Naive thymus-derived CD4-positive, alpha-beta T cell (primary cell): ENCODE measurements at regions of chr15 and their contacts with region 1.

Region 1: GRCh38 chr15:75201609-75202250 is at the start of gene C15orf39:
- DNase-seq: peak; percentile 66 to 88 (median 84)
- ATAC-seq: peak; percentile 78
- H3K4me3 ChIP-seq: peak within 1 kb of the TSS; percentile 84
- H3K4me3 Mint-ChIP-seq: peak within 1 kb of the TSS; percentile 89 to 98 (median 94)
- H3K27ac ChIP-seq: peak within 1 kb of the TSS; percentile 92
- H3K27ac Mint-ChIP-seq: peak within 1 kb of the TSS; percentile 69 to 95 (median 88)
- H3K4me1 ChIP-seq: peaks cover 26 to 27% of the 10 kb centered on the region in 2 donors
- H3K4me1 Mint-ChIP-seq: peaks cover 19 to 68% (median 39%) of the 10 kb centered on the region in 7 donors
- H3K27me3 ChIP-seq: no peaks in the 10 kb centered on the region
- H3K27me3 Mint-ChIP-seq: no peaks in the 10 kb centered on the region
- total RNA-seq, gene C15orf39: 30.9 to 124 (median 50.5) TPM

Region 2: GRCh38 chr15:73991726-73992593 is 1209.8 kb before region 1 on chr15 and contains the start of gene STOML1:
- CTCF ChIA-PET with region 1: no interaction called
- POLR2A ChIA-PET with region 1: no interaction called
- intact Hi-C with region 1: loop called in 1 of 2 experiments (anchors 5 kb)
- DNase-seq: peak; percentile 85 to 99 (median 91)
- ATAC-seq: peak; percentile 91
- H3K4me3 ChIP-seq: peak within 1 kb of the TSS; percentile 68
- H3K4me3 Mint-ChIP-seq: peak within 1 kb of the TSS; percentile 82 to 100 (median 98)
- H3K27ac ChIP-seq: peak within 1 kb of the TSS; percentile 90
- H3K27ac Mint-ChIP-seq: peak within 1 kb of the TSS; percentile 72 to 99 (median 87)
- H3K4me1 ChIP-seq: peaks cover 33 to 35% of the 10 kb centered on the region in 2 donors
- H3K4me1 Mint-ChIP-seq: peaks cover 28 to 62% (median 49%) of the 10 kb centered on the region in 7 donors
- H3K27me3 ChIP-seq: no peaks in the 10 kb centered on the region
- H3K27me3 Mint-ChIP-seq: no peaks in the 10 kb centered on the region
- total RNA-seq, gene STOML1: 7.5 to 14.5 (median 12.3) TPM

Region 3: DNA sequence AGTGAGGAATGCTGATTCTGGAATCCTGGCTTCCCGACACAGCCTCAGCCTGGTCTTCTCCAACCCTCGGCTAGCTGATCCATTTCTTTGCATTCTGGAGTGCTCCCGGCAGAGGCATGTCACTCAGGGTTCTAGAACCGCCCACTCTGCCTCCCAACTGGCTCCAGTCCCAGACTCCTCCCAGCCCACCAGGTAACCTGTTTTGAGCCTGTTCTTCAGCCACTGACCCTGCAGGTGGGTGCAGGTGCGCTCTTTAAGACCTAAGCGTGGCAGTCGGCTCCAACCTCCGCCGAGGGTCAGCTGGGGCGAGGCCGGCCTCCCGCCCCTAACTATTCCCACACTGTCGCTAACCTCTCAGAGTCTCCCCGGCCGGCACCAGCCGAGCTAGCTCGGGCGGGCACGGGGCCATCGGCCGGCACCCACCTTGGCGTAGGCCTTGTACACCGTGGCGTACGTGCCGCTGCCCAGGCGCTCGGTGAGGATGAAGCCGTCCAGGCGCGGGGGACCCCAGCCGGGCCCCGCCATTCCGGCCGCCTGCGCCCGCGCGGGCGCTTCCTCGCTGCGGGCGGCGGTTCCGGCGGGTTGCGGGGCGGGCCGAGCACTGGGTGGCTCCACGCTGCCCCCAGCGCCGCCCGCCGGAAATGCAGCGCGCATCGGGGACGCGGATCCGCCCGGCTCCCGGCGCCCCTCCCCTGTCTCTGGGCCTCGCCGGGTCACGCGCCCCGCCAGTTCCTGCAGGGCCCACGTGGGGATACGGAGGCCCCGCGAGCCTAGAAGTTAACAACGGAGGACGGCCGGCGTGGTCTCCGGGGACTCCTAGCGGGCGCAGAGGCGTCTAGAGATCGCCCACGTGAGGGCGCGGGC is 358.9 kb before region 1 on chr15 and contains the start of gene ULK3:
- CTCF ChIA-PET with region 1: no interaction called
- POLR2A ChIA-PET with region 1: interaction called, 5 read pairs
- intact Hi-C with region 1: loop called (anchors 2 to 10 kb)
- DNase-seq: peak; percentile 89 to 97 (median 93)
- ATAC-seq: peak; percentile 97
- H3K4me3 ChIP-seq: peak within 1 kb of the TSS; percentile 74
- H3K4me3 Mint-ChIP-seq: peak within 1 kb of the TSS; percentile 80 to 95 (median 90)
- H3K27ac ChIP-seq: peak within 1 kb of the TSS; percentile 79
- H3K27ac Mint-ChIP-seq: peak within 1 kb of the TSS; percentile 88 to 95 (median 94)
- H3K4me1 ChIP-seq: peaks cover 40 to 50% of the 10 kb centered on the region in 2 donors
- H3K4me1 Mint-ChIP-seq: peaks cover 26 to 62% (median 50%) of the 10 kb centered on the region in 7 donors
- H3K27me3 ChIP-seq: no peaks in the 10 kb centered on the region
- H3K27me3 Mint-ChIP-seq: no peaks in the 10 kb centered on the region
- total RNA-seq, gene ULK3: 53.2 to 106 (median 59.2) TPM

Region 4: DNA sequence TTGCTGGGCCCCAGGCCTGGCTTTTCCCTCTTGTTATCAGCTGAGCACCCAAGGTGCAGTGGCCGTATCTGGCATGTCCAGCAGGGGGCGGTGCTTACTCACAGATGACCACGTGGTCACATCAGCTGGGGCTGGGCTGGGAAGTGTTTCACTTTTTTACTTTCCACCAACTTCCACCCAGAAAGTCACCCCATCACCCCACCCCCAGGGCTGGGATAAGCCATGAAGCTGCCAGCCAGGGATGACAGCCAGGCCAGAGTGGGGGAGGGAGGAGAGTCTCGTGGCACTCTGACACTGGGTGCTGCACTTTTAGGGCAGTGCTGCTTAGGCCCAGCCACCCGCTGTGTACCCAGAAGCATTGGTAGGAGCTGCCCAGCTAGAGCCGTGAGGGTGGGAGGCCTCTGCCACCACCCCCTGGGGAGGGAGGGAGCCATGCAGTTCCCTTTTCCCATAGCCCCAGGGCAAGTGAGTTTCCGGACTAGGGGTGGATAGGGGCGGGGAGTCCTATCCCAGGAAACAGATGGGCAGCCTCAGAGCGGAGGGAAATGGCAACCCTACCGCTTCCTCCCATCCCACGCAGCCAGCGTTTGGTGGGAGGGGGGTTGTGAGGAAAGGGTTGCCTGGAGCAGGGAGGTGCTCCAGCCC is 172.2 kb before region 1 on chr15:
- CTCF ChIA-PET with region 1: interaction called, 59 read pairs
- POLR2A ChIA-PET with region 1: interaction called, 12 read pairs
- intact Hi-C with region 1: loop called in 1 of 2 experiments (anchors 1 kb)
- DNase-seq: peak; percentile 67 to 88 (median 80)
- ATAC-seq: peak; percentile 93
- H3K4me3 ChIP-seq: no peak overlapping the region
- H3K4me3 Mint-ChIP-seq: peak overlapping the region in 2 of 10 donors; percentile 6 to 62
- H3K27ac ChIP-seq: no peak overlapping the region
- H3K27ac Mint-ChIP-seq: peak overlapping the region in 5 of 9 donors; percentile 48 to 85 (median 58)
- H3K4me1 ChIP-seq: no peaks in the 10 kb centered on the region
- H3K4me1 Mint-ChIP-seq: peaks cover 16 to 51% (median 25%) of the 10 kb centered on the region in 7 donors
- H3K27me3 ChIP-seq: no peaks in the 10 kb centered on the region
- H3K27me3 Mint-ChIP-seq: no peaks in the 10 kb centered on the region

Region 5: DNA sequence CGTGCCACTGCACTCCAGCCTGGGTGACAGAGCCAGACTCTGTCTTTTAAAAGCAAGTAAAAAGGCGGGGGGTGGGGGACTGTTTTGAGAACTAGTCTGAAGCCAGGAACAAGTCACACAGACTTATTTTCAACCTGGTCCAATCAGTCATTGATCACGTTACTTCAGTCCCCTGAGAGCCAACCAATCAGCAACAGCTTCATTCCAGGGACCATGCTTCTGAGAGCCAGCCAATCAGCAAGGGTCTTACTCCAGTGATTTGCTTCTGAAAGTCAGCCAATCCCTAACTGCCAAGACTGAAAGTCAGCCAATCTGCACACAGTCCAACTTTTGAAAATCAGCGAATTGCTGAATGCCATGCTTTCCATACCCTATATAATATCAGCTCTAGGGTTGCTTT is 48.6 kb before region 1 on chr15:
- CTCF ChIA-PET with region 1: no interaction called
- POLR2A ChIA-PET with region 1: no interaction called
- intact Hi-C with region 1: loop called in 1 of 2 experiments (anchors 1 kb)
- DNase-seq: peak in 2 of 9 donors; percentile 9 to 13
- ATAC-seq: peak; percentile 68
- H3K4me3 ChIP-seq: no peak overlapping the region
- H3K4me3 Mint-ChIP-seq: peak overlapping the region in 1 of 10 donors; percentile 14
- H3K27ac ChIP-seq: no peak overlapping the region
- H3K27ac Mint-ChIP-seq: no peak overlapping the region
- H3K4me1 ChIP-seq: no peaks in the 10 kb centered on the region
- H3K4me1 Mint-ChIP-seq: peaks cover 0 to 41% (median 10%) of the 10 kb centered on the region in 7 donors
- H3K27me3 ChIP-seq: no peaks in the 10 kb centered on the region
- H3K27me3 Mint-ChIP-seq: peaks cover 0 to 9% (median 0%) of the 10 kb centered on the region in 5 donors

Region 6: DNA sequence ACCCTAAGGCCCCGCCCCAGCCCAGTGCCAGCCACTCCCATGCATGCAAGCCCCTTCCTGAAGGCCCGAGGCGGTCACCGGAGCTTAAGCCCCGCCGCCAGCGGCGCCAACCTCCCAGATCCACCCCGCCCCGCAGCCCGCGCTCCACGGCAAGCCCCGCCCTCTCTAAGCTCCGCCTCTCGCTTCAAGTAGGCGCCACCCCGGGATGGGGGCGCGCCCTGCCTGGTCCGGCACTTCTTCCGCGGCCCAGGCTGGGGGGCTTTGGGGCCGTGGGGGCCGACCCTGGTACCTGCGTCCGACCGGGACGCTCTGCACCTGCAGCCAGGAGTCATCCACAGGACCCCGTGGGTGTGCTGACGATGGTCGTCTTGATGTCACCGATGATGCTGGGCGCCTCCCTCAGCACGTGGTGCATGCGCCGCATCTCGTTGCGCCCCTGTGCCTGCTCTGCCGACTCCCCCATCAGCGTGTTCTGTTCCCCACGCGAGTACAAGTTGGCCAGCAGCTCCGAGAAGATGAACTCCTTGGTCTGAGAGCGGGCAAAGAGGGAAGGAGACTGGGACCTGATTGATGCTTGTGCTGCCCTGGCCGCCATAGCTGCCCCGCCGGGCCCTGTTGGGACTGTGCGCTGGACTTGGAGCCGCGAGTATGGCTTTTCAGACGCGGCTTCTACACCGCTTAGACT is 537.1 kb after region 1 on chr15:
- CTCF ChIA-PET with region 1: no interaction called
- POLR2A ChIA-PET with region 1: no interaction called
- intact Hi-C with region 1: loop called in 1 of 2 experiments (anchors 5 kb)
- DNase-seq: peak; percentile 81 to 92 (median 88)
- ATAC-seq: peak; percentile 97
- H3K4me3 ChIP-seq: peak overlapping the region; percentile 84
- H3K4me3 Mint-ChIP-seq: peak overlapping the region; percentile 83 to 94 (median 88)
- H3K27ac ChIP-seq: peak overlapping the region; percentile 58
- H3K27ac Mint-ChIP-seq: peak overlapping the region in 7 of 9 donors; percentile 51 to 86 (median 80)
- H3K4me1 ChIP-seq: peaks cover 0 to 6% of the 10 kb centered on the region in 2 donors
- H3K4me1 Mint-ChIP-seq: peaks cover 4 to 15% (median 12%) of the 10 kb centered on the region in 7 donors
- H3K27me3 ChIP-seq: no peaks in the 10 kb centered on the region
- H3K27me3 Mint-ChIP-seq: peaks cover 0 to 41% (median 0%) of the 10 kb centered on the region in 5 donors